ENCODE measurements at regions of chr6 and their contacts with region 1.

Region 1: DNA sequence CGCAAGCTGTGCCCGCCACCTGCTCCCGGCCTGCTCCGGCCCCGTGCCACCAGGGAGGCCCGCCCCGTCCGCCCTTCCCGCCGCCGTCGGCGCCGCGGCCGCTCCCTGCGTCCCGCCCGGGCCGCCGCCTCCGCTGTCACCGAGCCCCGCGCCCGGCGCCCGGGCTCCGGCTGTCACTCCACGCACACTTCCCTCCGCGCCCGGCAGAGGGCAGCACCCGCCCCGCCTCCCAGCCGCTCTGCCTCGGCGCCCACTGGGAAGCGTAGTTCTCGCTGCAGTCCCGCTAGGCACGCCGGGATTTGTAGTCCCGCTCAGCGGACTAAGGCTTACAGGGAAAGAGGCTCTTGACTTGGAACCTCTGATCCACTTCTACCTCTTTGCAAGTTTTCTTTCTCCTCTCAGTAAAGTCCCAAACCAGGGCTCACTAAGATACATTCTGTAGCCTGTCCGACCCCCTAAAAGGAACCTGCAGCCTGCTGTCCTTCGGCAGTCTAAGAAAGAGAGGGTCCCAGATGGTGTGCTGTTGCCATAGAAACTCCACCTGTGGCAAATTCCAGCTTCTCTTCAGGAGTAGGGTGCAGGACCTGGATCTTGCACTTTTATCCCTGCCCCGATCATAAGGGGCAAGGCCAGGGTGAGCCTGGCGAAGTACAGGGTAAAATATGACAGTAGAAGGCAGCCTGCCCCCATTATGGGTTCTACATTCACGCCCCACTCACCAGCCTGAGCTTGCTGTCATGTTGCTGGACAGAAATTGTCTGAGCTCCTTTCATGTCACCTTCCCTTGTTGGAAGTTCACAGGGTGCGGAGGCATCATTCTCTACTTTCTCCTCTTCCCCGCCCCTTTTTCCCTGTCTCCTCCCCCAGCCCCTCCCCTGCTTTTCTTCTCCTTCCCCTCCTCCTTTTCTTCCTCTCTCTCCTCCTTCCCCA is at the start of gene TFEB:
- DNase-seq: peak; percentile 90
- ATAC-seq: peak; percentile 60
- H3K4me3 ChIP-seq: peak within 1 kb of the TSS; percentile 51 to 83 (median 76)
- H3K27ac ChIP-seq: peak within 1 kb of the TSS; percentile 57
- H3K4me1 ChIP-seq: peaks cover 65% of the 10 kb centered on the region
- H3K27me3 ChIP-seq: no peaks in the 10 kb centered on the region; a peak in 1 of 5 replicates
- CTCF ChIP-seq: peak; percentile 94
- EP300 ChIP-seq: peak in 1 of 2 experiments; percentile 57; a peak in 2 of 4 replicates
- POLR2A ChIP-seq: no peak
- RAD21 ChIP-seq: peak; percentile 99
- total RNA-seq, gene TFEB: 12.8 and 13.3 TPM in 2 replicates

Region 2: DNA sequence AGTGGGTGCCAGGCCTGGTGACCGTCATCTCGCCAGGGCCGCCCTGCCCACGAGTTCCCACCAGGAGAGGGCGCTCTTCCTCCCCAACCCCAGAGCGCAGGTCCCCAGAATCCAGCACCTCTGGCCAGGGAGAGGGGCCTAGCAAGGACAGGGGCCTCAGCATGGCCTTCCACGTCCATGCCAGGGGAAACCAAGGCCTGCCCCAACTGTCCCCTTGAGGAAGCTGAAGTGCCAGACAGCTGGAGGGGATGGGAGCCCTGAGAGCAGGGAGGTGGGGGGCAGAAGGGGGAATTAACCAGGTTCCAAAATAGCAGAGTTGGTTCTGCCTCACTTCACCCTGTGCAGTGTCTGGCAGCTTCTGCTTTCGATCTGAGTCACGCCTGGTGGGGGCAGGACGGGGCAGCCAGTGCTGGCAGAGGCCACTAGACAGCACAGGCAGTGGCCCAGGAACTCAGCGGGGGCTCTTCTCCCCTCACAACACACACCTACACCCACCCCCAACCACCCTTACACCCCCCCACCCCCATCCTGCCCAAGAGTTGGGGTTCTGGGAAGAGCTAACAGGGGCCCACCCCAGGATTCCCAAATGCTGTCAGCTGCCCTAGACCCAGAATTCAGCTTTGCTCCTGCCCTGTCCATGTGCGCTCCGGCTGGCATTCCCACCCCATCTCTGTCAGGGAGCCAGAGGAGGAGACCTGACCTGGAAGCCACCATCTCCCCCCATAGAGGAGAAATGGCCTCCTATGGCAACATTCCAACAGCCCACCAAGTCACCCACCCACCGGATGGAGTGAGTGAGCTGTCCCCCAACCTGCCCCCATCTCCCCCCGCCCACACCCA is 29.5 kb before region 1 on chr6:
- CTCF ChIA-PET with region 1: interaction called, 3 read pairs
- POLR2A ChIA-PET with region 1: interaction called, 22 read pairs
- in situ Hi-C with region 1: no loop called
- intact Hi-C with region 1: loop called (anchors 1 kb)
- DNase-seq: peak; percentile 67
- ATAC-seq: peak; percentile 93
- H3K4me3 ChIP-seq: no peak overlapping the region
- H3K27ac ChIP-seq: no peak overlapping the region
- H3K4me1 ChIP-seq: peaks cover 18% of the 10 kb centered on the region
- H3K27me3 ChIP-seq: no peaks in the 10 kb centered on the region
- CTCF ChIP-seq: peak; percentile 99
- EP300 ChIP-seq: no peak
- POLR2A ChIP-seq: no peak
- RAD21 ChIP-seq: peak; percentile 92

Region 3: GRCh38 chr6:41723530-41724227 is 12.0 kb before region 1 on chr6:
- CTCF ChIA-PET with region 1: no interaction called
- POLR2A ChIA-PET with region 1: interaction called, 21 read pairs
- in situ Hi-C with region 1: no loop called
- intact Hi-C with region 1: no loop called
- DNase-seq: peak; percentile 77
- ATAC-seq: peak; percentile 91
- H3K4me3 ChIP-seq: peak overlapping the region in 1 of 3 experiments; percentile 34; a peak in 2 of 6 replicates
- H3K27ac ChIP-seq: peak overlapping the region; percentile 9
- H3K4me1 ChIP-seq: peaks cover 54% of the 10 kb centered on the region
- H3K27me3 ChIP-seq: no peaks in the 10 kb centered on the region
- CTCF ChIP-seq: peak; percentile 51
- EP300 ChIP-seq: peak; percentile 48 to 66; a peak in 1 of 4 replicates
- POLR2A ChIP-seq: peak in 1 of 2 experiments; percentile 54; a peak in 1 of 4 replicates
- RAD21 ChIP-seq: 0 out of 2 replicates have a peak, but pooled peaks have one; percentile 23

Region 4: GRCh38 chr6:41747256-41748101 is 11.8 kb after region 1 on chr6 and contains the start of gene PGC:
- CTCF ChIA-PET with region 1: no interaction called
- POLR2A ChIA-PET with region 1: interaction called, 120 read pairs
- in situ Hi-C with region 1: no loop called
- intact Hi-C with region 1: loop called (anchors 1 kb)
- DNase-seq: peak; percentile 99
- ATAC-seq: peak; percentile 89
- H3K4me3 ChIP-seq: peak within 1 kb of the TSS; percentile 16 to 60 (median 38); a peak in 5 of 6 replicates
- H3K27ac ChIP-seq: peak within 1 kb of the TSS; percentile 91
- H3K4me1 ChIP-seq: peaks cover 83% of the 10 kb centered on the region
- H3K27me3 ChIP-seq: no peaks in the 10 kb centered on the region
- CTCF ChIP-seq: peak; percentile 16; the same call in 1 of the 2 replicates
- EP300 ChIP-seq: peak; percentile 94; a peak in 3 of 4 replicates
- POLR2A ChIP-seq: peak; percentile 70 to 73; a peak in 3 of 4 replicates
- RAD21 ChIP-seq: no peak; the same call in 1 of the 2 replicates
- total RNA-seq, gene PGC: 225 and 502 TPM in 2 replicates

Region 5: DNA sequence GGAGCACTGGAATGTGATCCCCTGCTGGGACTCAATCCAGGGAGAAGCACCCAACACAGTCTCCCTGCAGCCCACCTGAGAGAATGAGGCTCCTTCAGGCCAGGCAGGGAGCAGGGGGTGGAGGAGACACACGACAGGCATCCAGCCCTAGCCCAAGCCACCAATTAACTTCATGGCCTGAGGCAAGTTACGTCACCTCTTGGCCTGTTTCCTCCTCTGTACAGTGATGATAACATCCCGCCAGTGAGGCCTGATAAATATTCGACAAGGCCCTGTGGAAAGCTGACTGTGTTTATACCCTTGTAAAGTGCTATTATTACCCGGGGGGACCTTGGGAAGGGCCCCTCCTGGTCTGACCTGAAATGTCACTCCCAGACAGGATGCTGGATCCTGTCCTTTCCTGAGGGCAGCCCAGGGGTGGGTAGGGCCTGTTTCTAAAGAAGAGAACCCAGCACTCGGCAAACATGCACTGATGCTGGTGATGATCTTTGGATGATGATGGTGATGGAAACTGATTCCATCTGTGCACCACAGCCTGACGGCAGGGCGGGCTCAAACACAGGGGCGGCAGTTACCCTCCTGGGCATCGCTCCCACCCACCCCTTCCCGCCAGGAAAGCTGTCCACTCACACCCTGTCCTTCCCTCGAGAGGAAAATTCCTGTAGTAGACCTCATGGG is 31.6 kb after region 1 on chr6:
- CTCF ChIA-PET with region 1: no interaction called
- POLR2A ChIA-PET with region 1: interaction called, 112 read pairs
- in situ Hi-C with region 1: no loop called
- intact Hi-C with region 1: loop called (anchors 2 kb)
- DNase-seq: peak; percentile 82
- ATAC-seq: peak; percentile 47
- H3K4me3 ChIP-seq: no peak overlapping the region
- H3K27ac ChIP-seq: no peak overlapping the region
- H3K4me1 ChIP-seq: peaks cover 45% of the 10 kb centered on the region
- H3K27me3 ChIP-seq: no peaks in the 10 kb centered on the region
- CTCF ChIP-seq: no peak
- EP300 ChIP-seq: no peak
- POLR2A ChIP-seq: no peak
- RAD21 ChIP-seq: no peak

Region 6: GRCh38 chr6:41846666-41847237 is 111.1 kb after region 1 on chr6:
- CTCF ChIA-PET with region 1: no interaction called
- POLR2A ChIA-PET with region 1: no interaction called
- in situ Hi-C with region 1: no loop called
- intact Hi-C with region 1: no loop called
- DNase-seq: peak; percentile 93
- ATAC-seq: peak; percentile 100
- H3K4me3 ChIP-seq: peak overlapping the region in 1 of 3 experiments; percentile 24; a peak in 1 of 6 replicates
- H3K27ac ChIP-seq: peak overlapping the region; percentile 68
- H3K4me1 ChIP-seq: peaks cover 16% of the 10 kb centered on the region
- H3K27me3 ChIP-seq: no peaks in the 10 kb centered on the region
- CTCF ChIP-seq: peak; percentile 93
- EP300 ChIP-seq: no peak
- POLR2A ChIP-seq: peak in 1 of 2 experiments; percentile 34; a peak in 1 of 4 replicates
- RAD21 ChIP-seq: peak; percentile 85